Caco-2 (cell line): ENCODE measurements at regions of chr22 and their contacts with region 1.

Region 1: GRCh38 chr22:21001560-21002325 is at the start of gene THAP7:
- DNase-seq: peak; percentile 96
- H3K4me3 ChIP-seq: peak within 1 kb of the TSS; percentile 43
- H3K4me3 Mint-ChIP-seq: peak within 1 kb of the TSS; percentile 98
- H3K27ac Mint-ChIP-seq: peak within 1 kb of the TSS; percentile 98
- H3K4me1 ChIP-seq: peaks cover 9% of the 10 kb centered on the region
- H3K4me1 Mint-ChIP-seq: peaks cover 10% of the 10 kb centered on the region
- H3K27me3 ChIP-seq: no peaks in the 10 kb centered on the region
- H3K27me3 Mint-ChIP-seq: no peaks in the 10 kb centered on the region
- CTCF ChIP-seq: no peak
- total RNA-seq, gene THAP7: 29.1 and 30.6 TPM in 2 replicates

Region 2: GRCh38 chr22:20981787-20982562 is 19.8 kb before region 1 on chr22 and contains the start of gene LZTR1:
- CTCF ChIA-PET with region 1: interaction called, 4 read pairs
- POLR2A ChIA-PET with region 1: interaction called, 19 read pairs
- intact Hi-C with region 1: loop called (anchors 1 kb)
- DNase-seq: peak; percentile 78 to 88
- H3K4me3 ChIP-seq: peak within 1 kb of the TSS; percentile 95
- H3K4me3 Mint-ChIP-seq: peak within 1 kb of the TSS; percentile 85
- H3K27ac Mint-ChIP-seq: peak within 1 kb of the TSS; percentile 71
- H3K4me1 ChIP-seq: peaks cover 14% of the 10 kb centered on the region; the same call in 1 of the 2 replicates
- H3K4me1 Mint-ChIP-seq: no peaks in the 10 kb centered on the region
- H3K27me3 ChIP-seq: no peaks in the 10 kb centered on the region
- H3K27me3 Mint-ChIP-seq: no peaks in the 10 kb centered on the region
- CTCF ChIP-seq: peak; percentile 51 to 84
- total RNA-seq, gene LZTR1: 37.2 and 41.3 TPM in 2 replicates

Region 3: DNA sequence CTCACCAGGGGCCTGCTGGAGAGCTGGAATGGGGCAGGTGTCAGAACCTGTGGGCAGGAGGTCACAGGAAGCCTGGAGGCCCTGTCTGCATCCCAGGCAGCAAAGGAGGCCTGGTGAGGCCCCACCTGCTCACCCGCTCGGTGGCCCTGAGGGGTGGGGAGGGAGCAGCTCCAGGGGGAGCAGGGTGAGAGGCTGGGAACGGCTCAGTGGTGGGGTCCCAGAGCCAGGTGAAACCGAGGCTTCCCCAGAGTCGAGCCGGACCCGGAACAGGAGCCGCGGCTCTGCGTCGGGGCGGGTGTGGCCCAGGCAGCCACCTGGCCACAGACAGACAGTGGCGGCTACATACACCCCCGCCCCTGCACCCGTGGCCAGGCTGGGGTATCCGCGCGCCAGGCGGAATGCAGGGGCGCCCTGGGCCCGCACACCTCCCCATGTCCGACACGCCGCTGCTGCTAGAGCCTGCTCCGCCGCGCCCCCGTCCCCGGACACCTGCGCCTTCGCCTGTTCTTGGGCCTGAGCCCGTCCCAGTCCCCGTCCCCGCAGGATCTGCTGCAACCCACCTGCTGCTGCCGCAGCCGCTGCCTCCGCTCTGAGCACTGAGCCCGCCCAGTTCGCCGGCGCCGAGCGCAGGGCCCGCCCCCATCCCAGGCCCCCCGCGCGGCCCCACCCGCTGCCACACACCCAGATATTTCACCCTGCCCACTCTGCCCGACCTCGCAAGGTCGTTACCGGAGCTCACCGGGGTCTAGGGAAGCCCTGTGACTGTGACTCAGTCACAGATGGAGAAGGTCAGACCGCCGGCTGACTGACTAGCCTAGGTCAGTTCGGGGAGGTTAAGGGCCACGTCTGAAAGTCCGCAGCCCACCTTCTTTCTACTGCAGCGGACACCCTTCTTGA is 30.5 kb after region 1 on chr22 and contains the start of gene SLC7A4:
- CTCF ChIA-PET with region 1: no interaction called
- POLR2A ChIA-PET with region 1: no interaction called
- intact Hi-C with region 1: loop called (anchors 1 kb)
- DNase-seq: no peak
- H3K4me3 ChIP-seq: peak within 1 kb of the TSS; percentile 35
- H3K4me3 Mint-ChIP-seq: peak within 1 kb of the TSS; percentile 62
- H3K27ac Mint-ChIP-seq: no peak within 1 kb of the TSS
- H3K4me1 ChIP-seq: peaks cover 24% of the 10 kb centered on the region
- H3K4me1 Mint-ChIP-seq: no peaks in the 10 kb centered on the region
- H3K27me3 ChIP-seq: no peaks in the 10 kb centered on the region
- H3K27me3 Mint-ChIP-seq: no peaks in the 10 kb centered on the region
- CTCF ChIP-seq: no peak
- total RNA-seq, gene SLC7A4: 1.9 and 2.1 TPM in 2 replicates